ENCODE measurements at regions of chr7 and their contacts with region 1.

Region 1: DNA sequence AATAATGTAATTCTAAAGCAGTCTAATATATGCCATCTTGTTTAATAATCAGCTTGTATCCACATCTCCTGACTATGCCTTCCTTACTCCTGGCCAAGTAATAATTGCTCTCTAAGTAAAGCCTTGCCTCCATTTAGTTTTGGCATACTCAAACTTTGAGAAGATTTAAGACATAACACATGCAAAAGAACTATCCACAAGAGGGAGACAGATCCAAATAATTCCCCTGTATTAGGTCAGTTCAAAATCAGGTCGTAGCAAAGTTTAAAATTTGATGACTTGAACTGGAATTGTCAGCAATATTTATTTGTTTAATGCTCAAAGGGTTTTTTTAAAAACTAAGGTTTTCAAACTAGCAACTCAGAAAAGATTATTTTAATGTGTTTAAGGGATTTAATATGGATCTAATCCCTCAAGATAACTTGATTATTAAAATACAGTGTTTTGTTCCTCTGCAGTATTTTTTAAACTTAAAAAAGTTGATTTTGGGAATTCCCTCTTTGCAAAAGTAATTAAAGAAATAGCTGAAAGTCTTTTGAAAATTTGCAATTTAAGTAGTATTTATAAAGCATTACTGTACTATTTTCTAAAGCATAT is 95.3 kb downstream of the HDAC9 start:
- DNase-seq: no peak
- H3K4me3 ChIP-seq: no peak overlapping the region
- H3K27ac ChIP-seq: no peak overlapping the region
- H3K4me1 ChIP-seq: no peaks in the 10 kb centered on the region
- H3K27me3 ChIP-seq: no peaks in the 10 kb centered on the region
- CTCF ChIP-seq: peak; percentile 23 to 66 (median 46)

Region 2: GRCh38 chr7:18458830-18459229 is 132.0 kb before region 1 on chr7:
- intact Hi-C with region 1: no loop called
- DNase-seq: peak in 1 of 2 donors; percentile 65
- H3K4me3 ChIP-seq: no peak overlapping the region
- H3K27ac ChIP-seq: no peak overlapping the region
- H3K4me1 ChIP-seq: no peaks in the 10 kb centered on the region
- H3K27me3 ChIP-seq: no peaks in the 10 kb centered on the region
- CTCF ChIP-seq: no peak

Region 3: DNA sequence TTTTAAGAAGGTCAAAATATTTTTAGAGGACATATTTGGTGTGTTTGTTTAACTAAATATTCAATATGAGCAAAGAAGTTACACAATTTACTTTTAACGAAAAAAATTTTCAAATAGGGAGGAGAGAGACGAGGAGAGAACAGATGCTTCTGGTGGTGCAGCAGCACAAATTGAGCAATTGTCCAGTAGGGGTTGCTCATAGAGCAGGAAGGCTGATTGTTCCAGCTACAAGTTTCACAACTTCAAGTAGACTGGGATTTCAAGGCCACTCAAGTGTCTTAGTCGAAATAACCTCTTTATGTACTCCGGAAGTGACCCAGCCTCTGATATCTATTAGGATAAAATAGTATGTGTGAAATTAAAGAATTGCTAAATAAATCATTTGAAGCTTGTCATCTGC is 102.6 kb after region 1 on chr7:
- intact Hi-C with region 1: no loop called
- DNase-seq: peak in 1 of 2 donors; percentile 71
- H3K4me3 ChIP-seq: peak overlapping the region in 1 of 2 donors; percentile 7
- H3K27ac ChIP-seq: peak overlapping the region in 1 of 2 donors; percentile 14
- H3K4me1 ChIP-seq: no peaks in the 10 kb centered on the region
- H3K27me3 ChIP-seq: no peaks in the 10 kb centered on the region
- CTCF ChIP-seq: peak; percentile 43 to 76 (median 52)

Region 4: GRCh38 chr7:19665399-19666008 is 1074.7 kb after region 1 on chr7:
- intact Hi-C with region 1: loop called (anchors 10 kb)
- DNase-seq: no peak
- H3K4me3 ChIP-seq: no peak overlapping the region
- H3K27ac ChIP-seq: no peak overlapping the region
- H3K4me1 ChIP-seq: no peaks in the 10 kb centered on the region
- H3K27me3 ChIP-seq: no peaks in the 10 kb centered on the region
- CTCF ChIP-seq: peak in 2 of 3 experiments; percentile 50 to 54

Measured in ascending aorta (tissue), 2 donors.